ENCODE measurements at regions of chr7 and their contacts with region 1.

Region 1: DNA sequence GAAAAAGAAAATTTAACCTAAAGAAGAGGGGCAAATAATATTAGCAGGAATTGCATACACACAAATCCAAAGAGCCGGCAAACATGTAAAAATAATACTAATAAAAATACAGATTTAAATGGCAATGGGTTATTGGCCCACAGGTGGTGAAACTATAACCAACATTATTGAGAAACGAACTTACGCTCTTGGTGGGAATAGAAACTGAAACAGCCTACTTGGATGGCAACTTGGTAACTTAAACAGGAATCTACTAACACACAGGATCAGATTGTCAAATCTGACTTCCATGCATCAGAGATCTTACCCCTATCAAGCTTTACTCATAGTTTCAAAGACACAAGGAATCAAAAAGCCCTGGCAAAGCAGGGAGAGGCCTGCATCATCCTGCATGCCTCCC is 66.5 kb downstream of the ANLN start:
- DNase-seq: no peak
- ATAC-seq: no peak
- H3K4me3 ChIP-seq: no peak overlapping the region
- H3K4me3 Mint-ChIP-seq: no peak overlapping the region
- H3K27ac ChIP-seq: no peak overlapping the region
- H3K27ac Mint-ChIP-seq: no peak overlapping the region
- H3K4me1 ChIP-seq: no peaks in the 10 kb centered on the region
- H3K4me1 Mint-ChIP-seq: no peaks in the 10 kb centered on the region
- H3K27me3 ChIP-seq: no peaks in the 10 kb centered on the region
- H3K27me3 Mint-ChIP-seq: no peaks in the 10 kb centered on the region

Region 2: GRCh38 chr7:36430881-36431280 is 25.3 kb before region 1 on chr7:
- CTCF ChIA-PET with region 1: interaction called, 3 to 11 read pairs
- POLR2A ChIA-PET with region 1: interaction called, 3 to 5 read pairs
- DNase-seq: no peak
- ATAC-seq: no peak
- H3K4me3 ChIP-seq: no peak overlapping the region
- H3K4me3 Mint-ChIP-seq: no peak overlapping the region
- H3K27ac ChIP-seq: no peak overlapping the region
- H3K27ac Mint-ChIP-seq: no peak overlapping the region
- H3K4me1 ChIP-seq: no peaks in the 10 kb centered on the region
- H3K4me1 Mint-ChIP-seq: peaks cover 0 to 3% (median 0%) of the 10 kb centered on the region in 3 donors
- H3K27me3 ChIP-seq: no peaks in the 10 kb centered on the region
- H3K27me3 Mint-ChIP-seq: no peaks in the 10 kb centered on the region

Measured in T-cell (primary cell).